ENCODE measurements at regions of chr12 and their contacts with region 1.

Region 1: GRCh38 chr12:120761519-120761934 is 35.9 kb downstream of the ACADS start:
- DNase-seq: no peak
- ATAC-seq: peak; percentile 80

Region 2: DNA sequence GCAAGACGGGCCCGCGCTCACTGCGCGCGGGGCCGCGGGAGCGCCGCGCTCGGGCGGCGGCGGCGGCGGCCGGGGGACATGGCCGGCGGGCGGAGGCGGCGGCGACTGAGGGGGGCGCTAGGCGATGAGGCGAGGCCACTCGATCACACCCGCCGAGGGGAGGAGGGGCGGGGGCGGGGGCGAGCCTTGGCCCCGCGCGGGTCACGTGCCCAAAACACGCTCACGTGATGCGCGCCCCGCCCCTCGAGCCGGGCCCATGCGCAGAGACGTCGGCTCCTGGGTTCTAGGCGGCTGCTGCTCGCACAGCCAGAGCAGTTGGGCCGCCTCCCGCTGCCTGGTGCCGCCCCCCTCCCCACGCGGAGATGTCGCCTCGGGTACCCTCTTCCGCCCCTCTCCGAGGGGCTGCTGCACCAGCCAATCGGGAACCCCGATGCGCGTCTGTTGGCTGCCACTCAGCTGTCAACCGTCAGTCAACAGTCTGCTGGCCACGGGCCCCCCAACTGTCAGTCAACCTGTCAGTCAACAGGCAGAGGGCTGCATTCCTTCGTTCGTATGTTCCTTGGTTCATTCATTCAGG is 142.8 kb after region 1 on chr12 and contains the start of gene SPPL3:
- intact Hi-C with region 1: loop called (anchors 10 kb)
- DNase-seq: peak; percentile 97
- ATAC-seq: peak; percentile 95
- total RNA-seq, gene SPPL3: 28.3 TPM

Region 3: GRCh38 chr12:121175383-121176227 is 414.1 kb after region 1 on chr12:
- intact Hi-C with region 1: no loop called
- DNase-seq: no peak
- ATAC-seq: peak; percentile 51